Head of caudate nucleus (tissue), 42 donors: ENCODE measurements at regions of chr13 and their contacts with region 1.

Region 1: GRCh38 chr13:31909864-31910551 is 121.6 kb upstream of the FRY start:
- DNase-seq: peak; percentile 15 to 86 (median 59)

Region 2: GRCh38 chr13:31614073-31614472 is 295.9 kb before region 1 on chr13:
- intact Hi-C with region 1: no loop called
- DNase-seq: no peak

Region 3: GRCh38 chr13:32019612-32020233 is 109.7 kb after region 1 on chr13:
- intact Hi-C with region 1: loop called (anchors 10 kb)
- DNase-seq: peak in 38 of 42 donors; percentile 23 to 83 (median 52)

Region 4: DNA sequence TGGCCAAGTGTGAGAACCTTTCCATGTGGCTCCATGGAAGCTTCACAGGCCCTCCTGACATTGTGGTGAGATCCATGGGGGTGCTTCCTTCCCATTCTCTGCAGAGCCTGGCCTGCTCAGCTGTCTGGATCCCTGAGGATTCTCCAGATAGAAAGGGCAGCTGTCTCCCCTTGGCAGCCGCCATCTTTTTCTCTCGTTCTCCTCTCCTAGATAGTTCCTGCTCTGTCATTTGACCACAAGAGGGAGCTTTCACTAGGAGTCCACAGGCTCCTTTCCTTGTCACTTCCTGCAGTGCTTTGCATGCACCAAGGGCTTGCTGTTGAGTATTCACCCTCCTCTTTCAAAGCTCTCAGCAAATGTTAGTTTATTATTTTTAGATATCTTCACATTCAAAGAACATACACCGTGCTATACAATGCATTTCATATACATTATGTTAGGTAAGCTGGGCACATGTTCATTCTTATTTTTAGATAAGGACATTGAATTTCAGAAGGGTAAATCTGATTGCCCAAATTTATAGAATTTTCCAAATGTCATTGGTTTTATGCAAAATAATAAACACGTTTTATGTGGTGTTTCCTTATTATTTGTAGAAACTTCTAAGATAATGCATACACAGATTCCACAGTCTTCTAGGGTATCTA is 254.7 kb after region 1 on chr13:
- intact Hi-C with region 1: no loop called
- DNase-seq: peak in 26 of 42 donors; percentile 8 to 81 (median 38)

Region 5: DNA sequence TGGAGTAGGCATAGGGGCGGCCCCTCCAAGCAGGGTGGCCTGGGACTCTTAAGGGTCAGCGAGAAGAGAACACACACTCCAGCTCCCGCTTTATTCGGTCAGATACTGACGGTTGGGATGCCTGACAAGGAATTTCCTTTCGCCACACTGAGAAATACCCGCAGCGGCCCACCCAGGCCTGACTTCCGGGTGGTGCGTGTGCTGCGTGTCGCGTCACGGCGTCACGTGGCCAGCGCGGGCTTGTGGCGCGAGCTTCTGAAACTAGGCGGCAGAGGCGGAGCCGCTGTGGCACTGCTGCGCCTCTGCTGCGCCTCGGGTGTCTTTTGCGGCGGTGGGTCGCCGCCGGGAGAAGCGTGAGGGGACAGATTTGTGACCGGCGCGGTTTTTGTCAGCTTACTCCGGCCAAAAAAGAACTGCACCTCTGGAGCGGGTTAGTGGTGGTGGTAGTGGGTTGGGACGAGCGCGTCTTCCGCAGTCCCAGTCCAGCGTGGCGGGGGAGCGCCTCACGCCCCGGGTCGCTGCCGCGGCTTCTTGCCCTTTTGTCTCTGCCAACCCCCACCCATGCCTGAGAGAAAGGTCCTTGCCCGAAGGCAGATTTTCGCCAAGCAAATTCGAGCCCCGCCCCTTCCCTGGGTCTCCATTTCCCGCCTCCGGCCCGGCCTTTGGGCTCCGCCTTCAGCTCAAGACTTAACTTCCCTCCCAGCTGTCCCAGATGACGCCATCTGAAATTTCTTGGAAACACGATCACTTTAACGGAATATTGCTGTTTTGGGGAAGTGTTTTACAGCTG is 405.4 kb after region 1 on chr13 and contains the starts of genes BRCA2 and ZAR1L:
- intact Hi-C with region 1: loop called (anchors 10 kb)
- DNase-seq: peak; percentile 85 to 97 (median 93)